Activated CD4-positive, alpha-beta T cell treated with anti-CD3 and anti-CD28 coated beads for 36 hours (primary cell): ENCODE measurements at regions of chr1 and their contacts with region 1.

Region 1: DNA sequence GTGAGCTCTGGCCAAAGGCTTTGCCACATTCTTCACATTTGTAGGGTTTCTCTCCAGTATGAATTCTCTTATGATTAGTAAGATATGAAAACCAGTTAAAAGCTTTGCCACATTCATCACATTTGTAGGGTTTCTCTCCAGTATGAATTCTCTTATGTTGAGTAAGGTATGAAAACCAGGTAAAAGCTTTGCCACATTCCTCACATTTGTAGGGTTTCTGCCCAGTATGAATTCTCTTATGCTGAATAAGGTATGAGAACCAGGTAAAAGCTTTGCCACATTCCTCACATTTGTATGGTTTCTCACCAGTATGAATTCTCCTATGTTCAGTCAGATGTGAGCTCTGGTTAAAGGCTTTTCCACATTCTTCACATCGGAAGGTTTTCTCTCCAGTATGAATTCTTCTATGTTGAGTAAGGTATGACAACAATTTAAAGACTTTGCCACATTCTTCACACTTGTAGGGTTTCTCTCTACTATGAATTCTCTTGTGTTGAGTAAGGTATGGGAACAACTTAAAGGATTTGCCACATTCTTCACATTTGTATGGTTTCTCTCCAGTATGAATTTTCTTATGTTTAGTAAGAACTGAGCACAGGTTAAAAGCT is 20.7 kb downstream of the ZNF695 start:
- DNase-seq: no peak
- ATAC-seq: no peak
- H3K4me3 Mint-ChIP-seq: no peak overlapping the region
- H3K27ac Mint-ChIP-seq: no peak overlapping the region
- H3K4me1 Mint-ChIP-seq: no peaks in the 10 kb centered on the region
- H3K27me3 Mint-ChIP-seq: no peaks in the 10 kb centered on the region

Region 2: GRCh38 chr1:246608616-246609376 is 378.4 kb before region 1 on chr1:
- CTCF ChIA-PET with region 1: no interaction called
- POLR2A ChIA-PET with region 1: no interaction called
- intact Hi-C with region 1: no loop called
- DNase-seq: peak; percentile 53
- ATAC-seq: peak; percentile 82
- H3K4me3 Mint-ChIP-seq: no peak overlapping the region
- H3K27ac Mint-ChIP-seq: peak overlapping the region; percentile 55
- H3K4me1 Mint-ChIP-seq: peaks cover 46% of the 10 kb centered on the region
- H3K27me3 Mint-ChIP-seq: no peaks in the 10 kb centered on the region

Region 3: GRCh38 chr1:247079141-247079874 is 92.1 kb after region 1 on chr1:
- CTCF ChIA-PET with region 1: no interaction called
- POLR2A ChIA-PET with region 1: no interaction called
- intact Hi-C with region 1: no loop called
- DNase-seq: peak; percentile 34
- ATAC-seq: no peak
- H3K4me3 Mint-ChIP-seq: peak overlapping the region; percentile 89
- H3K27ac Mint-ChIP-seq: peak overlapping the region; percentile 91
- H3K4me1 Mint-ChIP-seq: peaks cover 27% of the 10 kb centered on the region
- H3K27me3 Mint-ChIP-seq: peaks cover 5% of the 10 kb centered on the region

Region 4: DNA sequence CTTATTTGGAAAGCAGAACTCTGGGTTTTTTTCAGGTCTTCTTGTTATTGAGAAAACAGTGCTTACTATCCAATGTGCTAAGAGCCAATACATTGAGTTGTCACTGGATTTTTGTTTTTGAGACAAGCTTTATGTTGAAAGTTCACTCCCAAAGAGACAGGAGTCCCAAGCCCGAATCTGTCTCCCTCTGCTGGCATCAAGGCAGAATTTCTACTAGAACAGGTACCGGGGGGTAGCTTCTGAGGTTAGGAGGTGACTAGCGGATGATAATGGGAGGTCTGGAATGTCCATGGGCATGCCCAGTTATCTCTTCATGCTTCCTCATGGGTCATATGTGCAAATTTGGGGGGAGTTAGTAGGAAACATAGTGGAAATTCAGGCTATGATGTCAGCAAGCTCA is 159.5 kb after region 1 on chr1:
- CTCF ChIA-PET with region 1: no interaction called
- POLR2A ChIA-PET with region 1: no interaction called
- intact Hi-C with region 1: loop called in 1 of 2 experiments (anchors 5 kb)
- DNase-seq: no peak
- ATAC-seq: no peak
- H3K4me3 Mint-ChIP-seq: no peak overlapping the region
- H3K27ac Mint-ChIP-seq: no peak overlapping the region
- H3K4me1 Mint-ChIP-seq: no peaks in the 10 kb centered on the region
- H3K27me3 Mint-ChIP-seq: no peaks in the 10 kb centered on the region